ENCODE measurements at regions of chr1 and their contacts with region 1.

Region 1: DNA sequence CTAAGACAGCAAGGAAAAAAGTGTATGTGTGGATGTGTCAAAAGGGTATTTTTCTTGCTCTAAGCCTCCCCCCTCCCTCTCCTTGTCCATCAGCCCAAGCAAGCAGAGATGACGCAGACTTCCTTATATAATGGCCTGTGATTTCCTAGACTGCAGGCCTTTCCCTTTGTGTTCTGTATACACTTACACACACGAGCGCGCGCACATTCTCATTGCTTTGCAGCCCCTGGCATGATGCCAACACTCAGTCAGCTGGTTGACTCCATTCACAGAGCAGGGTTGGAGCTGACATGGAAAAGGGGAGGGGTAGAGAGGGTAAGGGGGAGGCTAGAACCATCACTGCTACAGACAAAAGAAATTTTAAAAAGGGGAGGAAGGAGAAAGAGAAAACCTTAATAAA is 41.8 kb downstream of the GATAD2B start:
- DNase-seq: peak; percentile 74 to 98 (median 90)

Region 2: GRCh38 chr1:153705485-153705884 is 175.5 kb before region 1 on chr1:
- intact Hi-C with region 1: no loop called
- DNase-seq: peak in 1 of 10 donors; percentile 81

Region 3: DNA sequence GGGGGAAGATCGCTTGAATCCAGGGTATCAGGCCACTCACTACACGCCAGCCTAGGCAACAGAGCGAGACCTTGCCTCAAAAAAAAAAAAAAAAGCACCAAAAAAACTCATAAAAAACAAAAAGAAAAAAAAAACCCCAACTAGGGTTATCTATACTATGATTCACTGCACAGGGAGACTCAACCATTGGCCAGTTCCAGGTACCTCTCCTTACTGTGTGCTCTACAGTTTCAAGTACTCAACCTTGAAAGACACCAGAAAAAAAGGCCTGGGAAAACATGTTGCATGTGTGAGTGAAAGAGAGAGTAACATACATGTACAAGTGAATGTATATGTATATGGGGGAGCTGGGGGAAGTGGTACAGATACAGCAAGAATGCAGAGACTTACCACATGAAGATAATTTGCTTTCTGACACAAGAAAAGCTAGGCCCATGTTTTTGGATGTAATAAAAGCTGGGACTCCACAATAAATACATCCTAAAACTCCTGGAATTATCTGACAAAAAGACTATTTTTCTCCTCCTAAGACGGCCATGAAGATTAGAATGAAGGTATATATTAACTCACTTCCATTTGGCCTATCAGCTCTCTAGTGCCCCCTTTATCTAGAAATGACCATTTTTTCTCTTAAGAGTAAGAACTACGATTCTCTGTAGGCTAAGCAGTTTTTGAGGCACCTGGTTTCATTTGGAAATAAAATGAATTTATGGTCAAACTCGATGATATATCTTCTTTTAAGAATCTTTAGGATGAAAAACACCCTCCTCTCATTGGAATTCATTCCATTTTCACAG is 53.6 kb before region 1 on chr1:
- intact Hi-C with region 1: loop called (anchors 10 kb)
- DNase-seq: no peak

Region 4: DNA sequence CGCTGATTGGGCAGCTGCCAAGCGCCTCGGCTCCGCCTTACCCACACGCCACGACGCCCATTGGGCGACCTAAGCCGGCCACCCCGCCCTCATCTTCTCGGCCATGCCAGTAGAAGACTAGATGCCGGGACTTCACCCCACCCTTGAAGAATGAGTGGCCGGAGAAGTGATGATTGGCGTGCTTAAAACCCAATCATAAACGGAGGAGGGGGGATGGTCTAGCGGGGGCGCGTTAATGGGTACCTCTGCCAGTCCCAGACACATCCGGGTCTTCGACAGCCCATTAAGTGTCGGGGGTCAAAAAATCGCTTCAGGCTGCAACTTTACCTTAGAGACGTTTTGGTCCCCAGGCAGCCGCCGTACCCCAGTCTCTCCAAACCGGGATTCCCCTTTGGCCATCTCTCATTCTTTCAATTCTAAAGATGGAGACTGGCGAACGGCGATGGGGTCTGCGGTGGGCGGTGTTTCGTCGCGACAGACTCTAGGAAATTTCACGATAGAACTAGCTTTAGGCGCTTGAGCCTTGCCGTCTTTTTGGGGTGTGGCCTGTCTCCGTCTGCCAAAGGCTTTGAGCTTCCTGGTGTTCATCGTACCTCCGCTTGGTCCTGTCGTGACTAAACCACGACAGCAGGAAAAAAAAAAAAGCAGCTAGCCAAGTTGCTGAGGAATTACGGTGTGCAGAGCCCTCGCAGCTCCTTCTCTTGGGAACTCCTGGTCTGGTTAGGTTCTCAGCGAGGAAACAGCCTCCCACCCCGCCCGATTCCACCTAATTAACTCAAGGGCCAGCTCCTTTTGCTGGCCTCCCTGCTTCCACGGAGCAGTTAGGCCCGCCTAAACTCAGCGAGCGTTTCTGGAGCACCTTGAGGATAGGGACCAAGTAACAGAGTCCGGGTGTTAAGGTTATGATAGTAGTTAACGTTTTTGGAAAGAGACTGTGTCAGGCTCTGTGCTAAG is 42.3 kb after region 1 on chr1 and contains the start of gene GATAD2B:
- intact Hi-C with region 1: loop called (anchors 2 kb)
- DNase-seq: peak; percentile 97 to 100 (median 99)

Region 5: DNA sequence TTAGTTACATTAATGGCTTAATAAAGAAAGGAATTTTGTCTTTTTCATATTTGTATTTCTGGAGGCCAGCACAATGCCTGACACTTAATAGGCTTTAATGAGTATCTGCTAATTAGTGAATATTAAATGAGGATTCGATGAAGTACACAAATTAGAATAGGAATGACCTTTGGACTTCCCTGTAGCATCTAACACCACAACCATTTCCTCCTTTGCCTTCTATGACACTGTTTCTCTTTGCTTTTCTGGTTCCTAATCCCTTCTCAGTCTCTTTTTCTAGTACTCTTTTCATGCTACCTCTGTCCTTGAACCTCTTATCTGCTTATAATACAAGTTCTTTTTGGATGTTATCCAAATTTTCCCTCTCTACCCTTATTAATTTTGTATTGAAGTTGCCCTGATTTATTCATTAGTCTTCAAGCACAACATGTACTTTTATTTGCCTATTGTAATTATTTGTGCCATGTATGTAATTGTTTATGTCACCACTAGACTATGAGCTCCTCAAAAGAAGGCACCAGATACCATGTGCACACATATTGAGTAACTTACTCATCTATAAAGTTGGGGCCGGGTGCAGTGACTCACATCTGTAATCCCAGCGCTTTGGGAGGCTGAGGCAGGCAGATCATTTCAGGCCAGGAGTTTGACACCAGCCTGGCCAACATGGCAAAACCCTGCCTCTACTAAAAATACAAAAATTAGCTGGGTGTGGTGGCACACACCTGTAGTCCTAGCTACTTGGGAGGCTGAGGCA is 133.4 kb after region 1 on chr1:
- intact Hi-C with region 1: no loop called
- DNase-seq: no peak

Measured in posterior cingulate gyrus (tissue), 11 donors.